GM12878 (cell line): ENCODE measurements at regions of chr1 and their contacts with region 1.

Region 1: DNA sequence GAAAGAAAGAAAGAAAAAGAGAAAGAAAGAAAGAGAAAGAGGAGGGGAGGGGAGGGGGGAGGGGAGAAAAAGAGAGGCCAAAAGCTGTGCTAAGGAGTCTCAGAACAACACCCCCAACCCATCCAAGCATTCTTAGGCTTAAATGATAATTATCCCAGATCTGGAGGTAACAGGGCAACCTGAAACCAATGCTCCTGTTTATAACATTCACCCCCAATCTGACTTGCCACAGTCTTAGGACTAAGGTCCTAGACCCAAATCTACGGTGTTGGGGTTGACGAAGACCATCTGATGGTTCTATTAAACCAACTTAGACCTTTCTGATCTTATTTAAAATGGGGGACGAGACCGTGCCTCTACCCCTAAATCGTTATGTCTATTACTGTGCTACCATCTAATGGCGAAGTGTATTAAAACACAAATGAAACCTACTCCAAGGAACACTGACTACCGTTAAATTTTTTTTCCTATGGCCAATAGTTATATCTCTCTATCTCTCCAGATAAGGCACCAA is 119.3 kb upstream of the CDC42BPA start:
- DNase-seq: no peak
- ATAC-seq: no peak
- H3K4me3 ChIP-seq: no peak overlapping the region
- H3K27ac ChIP-seq: no peak overlapping the region
- H3K4me1 ChIP-seq: no peaks in the 10 kb centered on the region
- H3K27me3 ChIP-seq: no peaks in the 10 kb centered on the region
- CTCF ChIP-seq: peak in 1 of 3 experiments; percentile 29; a peak in 1 of 6 replicates
- EP300 ChIP-seq: no peak
- POLR2A ChIP-seq: no peak
- RAD21 ChIP-seq: peak; percentile 29; the same call in 1 of the 2 replicates

Region 2: GRCh38 chr1:226912587-226913176 is 524.9 kb before region 1 on chr1:
- CTCF ChIA-PET with region 1: no interaction called
- POLR2A ChIA-PET with region 1: no interaction called
- RAD21 ChIA-PET with region 1: no interaction called
- SMC1A ChIA-PET with region 1: no interaction called
- in situ Hi-C with region 1: loop called (anchors 10 kb)
- intact Hi-C with region 1: loop called (anchors 5 kb)
- DNase-seq: peak; percentile 19
- ATAC-seq: peak; percentile 74
- H3K4me3 ChIP-seq: no peak overlapping the region
- H3K27ac ChIP-seq: no peak overlapping the region
- H3K4me1 ChIP-seq: peaks cover 10% of the 10 kb centered on the region
- H3K27me3 ChIP-seq: no peaks in the 10 kb centered on the region
- CTCF ChIP-seq: peak; percentile 66 to 84 (median 69); a peak in 5 of 6 replicates
- EP300 ChIP-seq: no peak
- POLR2A ChIP-seq: no peak
- RAD21 ChIP-seq: peak; percentile 87

Region 3: DNA sequence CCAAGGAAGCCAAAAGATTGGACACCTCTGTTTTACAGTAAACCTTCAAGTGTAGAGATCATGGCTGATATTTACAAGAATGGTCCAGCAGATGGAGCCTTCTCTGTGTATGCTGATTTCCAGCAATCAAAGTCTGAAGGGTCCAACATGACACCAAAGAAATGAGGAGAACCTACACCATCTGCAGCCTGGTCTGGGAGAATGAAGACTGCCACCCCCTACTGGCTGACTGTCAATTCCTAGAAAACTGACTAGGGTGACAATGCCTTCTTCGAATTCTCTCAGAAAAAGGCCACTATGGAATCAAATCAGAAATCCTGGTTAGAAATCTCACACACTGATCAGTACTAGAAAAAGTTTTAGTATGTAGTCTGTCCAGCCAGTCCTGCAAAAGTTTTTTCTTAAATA is 202.6 kb before region 1 on chr1:
- CTCF ChIA-PET with region 1: no interaction called
- POLR2A ChIA-PET with region 1: no interaction called
- RAD21 ChIA-PET with region 1: no interaction called
- SMC1A ChIA-PET with region 1: no interaction called
- in situ Hi-C with region 1: no loop called
- intact Hi-C with region 1: loop called (anchors 10 kb)
- DNase-seq: no peak
- ATAC-seq: peak; percentile 76
- H3K4me3 ChIP-seq: no peak overlapping the region
- H3K27ac ChIP-seq: no peak overlapping the region
- H3K4me1 ChIP-seq: no peaks in the 10 kb centered on the region
- H3K27me3 ChIP-seq: no peaks in the 10 kb centered on the region
- CTCF ChIP-seq: peak; percentile 12 to 38 (median 26); a peak in 4 of 6 replicates
- EP300 ChIP-seq: no peak
- POLR2A ChIP-seq: no peak
- RAD21 ChIP-seq: peak; percentile 17; the same call in 1 of the 2 replicates

Region 4: DNA sequence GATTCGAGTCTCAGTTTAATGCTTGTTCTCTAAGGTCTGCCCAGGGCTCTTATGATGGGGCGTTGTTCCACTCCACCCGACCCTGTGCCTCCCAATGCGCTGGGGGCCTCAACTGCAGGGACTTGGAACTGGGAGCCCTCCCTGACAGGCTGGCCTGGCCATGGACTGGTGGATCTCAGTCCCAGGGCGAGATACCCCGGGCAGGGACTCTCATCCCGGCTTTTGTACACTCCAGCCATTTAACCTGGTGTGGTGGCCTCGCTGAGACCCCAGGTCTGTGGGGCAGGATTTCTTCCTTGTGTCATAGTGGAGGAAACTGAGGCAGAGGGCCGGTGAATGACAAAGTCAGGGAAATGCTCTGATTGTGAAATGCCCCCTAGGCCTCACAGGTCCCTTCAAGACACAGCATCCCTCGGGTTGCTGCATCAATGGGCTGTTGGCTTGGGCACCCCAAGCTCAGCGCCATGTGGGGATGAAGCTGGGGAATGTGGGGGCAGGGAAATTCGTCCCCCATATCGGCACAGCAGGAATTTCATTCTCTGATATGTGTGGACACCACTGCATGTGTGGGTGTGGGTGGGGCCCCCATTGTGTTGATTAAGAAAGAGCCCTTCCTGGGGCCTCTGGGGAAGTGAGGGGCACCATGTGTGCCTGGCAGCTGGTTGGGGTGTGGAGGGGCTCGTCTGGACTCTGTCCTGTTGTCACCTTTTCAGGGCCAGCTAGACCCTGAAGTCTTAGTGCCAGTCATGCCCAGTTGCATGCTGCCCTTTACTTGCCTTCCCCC is 105.9 kb after region 1 on chr1:
- CTCF ChIA-PET with region 1: no interaction called
- POLR2A ChIA-PET with region 1: no interaction called
- RAD21 ChIA-PET with region 1: no interaction called
- SMC1A ChIA-PET with region 1: no interaction called
- in situ Hi-C with region 1: no loop called
- intact Hi-C with region 1: no loop called
- DNase-seq: no peak
- ATAC-seq: no peak
- H3K4me3 ChIP-seq: no peak overlapping the region
- H3K27ac ChIP-seq: no peak overlapping the region
- H3K4me1 ChIP-seq: peaks cover 3% of the 10 kb centered on the region; the same call in 1 of the 2 replicates
- H3K27me3 ChIP-seq: no peaks in the 10 kb centered on the region
- CTCF ChIP-seq: no peak
- EP300 ChIP-seq: no peak
- POLR2A ChIP-seq: no peak
- RAD21 ChIP-seq: no peak